ENCODE measurements at regions of chr2 and their contacts with region 1.

Region 1: DNA sequence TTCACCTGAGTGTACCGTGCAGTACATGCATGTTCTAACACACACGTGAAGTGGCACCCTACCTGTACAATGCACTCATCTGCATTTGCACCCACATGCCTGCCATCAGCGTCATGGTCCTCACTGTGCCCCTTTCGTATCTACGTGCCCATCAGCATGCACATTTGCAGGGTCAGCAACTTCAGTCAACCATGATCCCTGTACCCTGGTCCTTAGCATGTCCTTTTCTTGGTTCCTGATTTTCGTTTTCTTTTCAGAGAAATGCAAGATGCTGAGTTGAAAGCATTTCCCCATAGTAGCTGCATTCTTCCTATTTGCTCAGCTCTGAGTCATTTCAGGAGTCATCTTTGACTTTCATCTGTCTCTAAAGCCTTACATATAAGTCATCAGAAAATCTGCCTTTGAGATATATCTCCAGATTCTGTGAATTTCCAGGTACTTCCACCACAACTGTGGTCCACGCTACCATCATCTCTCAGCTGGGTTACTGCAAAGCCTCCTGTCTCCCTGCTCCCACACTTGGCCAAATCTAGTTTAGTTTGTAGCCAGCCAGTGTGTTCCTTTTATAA is 14.7 kb upstream of the PUM2 start:
- DNase-seq: peak; percentile 81
- ATAC-seq: peak; percentile 80
- H3K4me3 Mint-ChIP-seq: no peak overlapping the region
- H3K27ac Mint-ChIP-seq: peak overlapping the region; percentile 57
- H3K4me1 Mint-ChIP-seq: peaks cover 17% of the 10 kb centered on the region
- H3K27me3 Mint-ChIP-seq: peaks cover 14% of the 10 kb centered on the region
- CTCF ChIP-seq: no peak

Region 2: DNA sequence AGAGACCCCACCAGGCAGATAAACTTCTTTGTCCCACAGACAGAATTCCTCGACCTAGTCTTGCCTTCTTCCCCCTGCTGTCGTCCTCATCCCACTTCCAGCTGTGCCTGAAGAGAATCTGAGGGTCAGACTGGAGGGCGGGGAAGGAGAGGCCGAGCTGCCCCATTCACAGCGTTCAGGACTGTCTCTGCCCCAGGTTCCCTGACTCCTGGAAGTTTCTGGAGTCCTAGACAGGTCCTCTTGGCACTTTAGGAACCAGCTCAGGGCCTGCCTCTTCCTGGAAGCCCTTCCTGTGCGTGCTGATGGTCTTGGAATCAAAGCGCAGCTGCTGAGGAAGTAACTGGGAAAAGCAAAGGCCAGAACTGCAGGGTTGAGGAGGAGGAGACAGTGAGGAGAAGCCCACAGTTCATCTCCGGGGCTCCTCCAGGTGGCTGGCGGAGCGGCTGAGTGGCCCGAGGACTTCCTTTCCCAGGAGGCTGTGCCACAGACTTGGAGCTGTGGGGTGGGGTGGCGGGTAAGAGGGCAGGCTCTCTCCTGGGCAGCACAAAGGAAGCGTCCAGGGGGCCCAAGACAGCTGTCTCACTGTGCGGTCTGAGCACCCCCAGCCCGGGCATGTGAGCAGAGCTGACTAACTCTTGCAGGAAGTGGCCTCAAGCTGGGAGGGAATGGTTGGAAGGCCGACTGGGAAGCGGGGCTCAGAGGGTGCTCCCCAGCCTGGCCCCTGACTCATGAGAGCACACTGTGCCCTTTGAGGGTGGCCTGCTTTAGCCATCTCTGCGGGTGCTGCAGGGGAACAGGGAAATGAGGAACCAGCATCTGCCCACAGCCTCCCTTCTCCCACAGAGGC is 179.9 kb before region 1 on chr2:
- CTCF ChIA-PET with region 1: no interaction called
- POLR2A ChIA-PET with region 1: no interaction called
- intact Hi-C with region 1: no loop called
- DNase-seq: no peak
- ATAC-seq: no peak
- H3K4me3 Mint-ChIP-seq: no peak overlapping the region
- H3K27ac Mint-ChIP-seq: no peak overlapping the region
- H3K4me1 Mint-ChIP-seq: no peaks in the 10 kb centered on the region
- H3K27me3 Mint-ChIP-seq: peaks cover 1% of the 10 kb centered on the region
- CTCF ChIP-seq: no peak

Region 3: DNA sequence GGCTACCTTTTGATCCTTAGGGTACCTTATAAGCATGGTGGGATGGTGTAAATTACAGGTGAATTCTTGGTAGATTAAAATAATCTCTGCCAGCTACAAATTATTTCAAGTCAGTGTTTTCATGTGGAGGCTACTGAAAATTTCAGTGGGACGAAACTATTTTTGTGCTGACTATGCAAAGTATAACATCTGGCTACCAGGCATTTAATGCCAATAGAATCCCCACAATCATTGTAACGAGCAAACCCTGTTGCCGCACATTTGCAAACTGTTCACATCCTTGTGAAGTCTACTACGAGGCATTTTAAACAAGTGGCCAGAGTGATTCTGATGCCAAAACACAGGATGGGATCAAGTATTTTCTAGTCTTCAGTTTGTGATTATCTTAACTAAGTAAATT is 92.3 kb before region 1 on chr2:
- CTCF ChIA-PET with region 1: no interaction called
- POLR2A ChIA-PET with region 1: no interaction called
- intact Hi-C with region 1: no loop called
- DNase-seq: no peak
- ATAC-seq: no peak
- H3K4me3 Mint-ChIP-seq: no peak overlapping the region
- H3K27ac Mint-ChIP-seq: peak overlapping the region; percentile 1
- H3K4me1 Mint-ChIP-seq: peaks cover 14% of the 10 kb centered on the region
- H3K27me3 Mint-ChIP-seq: no peaks in the 10 kb centered on the region
- CTCF ChIP-seq: no peak

Region 4: GRCh38 chr2:20350753-20351554 is 14.4 kb before region 1 on chr2 and contains the start of gene PUM2:
- CTCF ChIA-PET with region 1: interaction called, 6 read pairs
- POLR2A ChIA-PET with region 1: interaction called, 37 read pairs
- intact Hi-C with region 1: no loop called
- DNase-seq: peak; percentile 93
- ATAC-seq: peak; percentile 85
- H3K4me3 Mint-ChIP-seq: no peak within 1 kb of the TSS
- H3K27ac Mint-ChIP-seq: peak within 1 kb of the TSS; percentile 92
- H3K4me1 Mint-ChIP-seq: peaks cover 26% of the 10 kb centered on the region
- H3K27me3 Mint-ChIP-seq: no peaks in the 10 kb centered on the region
- CTCF ChIP-seq: no peak
- total RNA-seq, gene PUM2: 104 TPM

Region 5: DNA sequence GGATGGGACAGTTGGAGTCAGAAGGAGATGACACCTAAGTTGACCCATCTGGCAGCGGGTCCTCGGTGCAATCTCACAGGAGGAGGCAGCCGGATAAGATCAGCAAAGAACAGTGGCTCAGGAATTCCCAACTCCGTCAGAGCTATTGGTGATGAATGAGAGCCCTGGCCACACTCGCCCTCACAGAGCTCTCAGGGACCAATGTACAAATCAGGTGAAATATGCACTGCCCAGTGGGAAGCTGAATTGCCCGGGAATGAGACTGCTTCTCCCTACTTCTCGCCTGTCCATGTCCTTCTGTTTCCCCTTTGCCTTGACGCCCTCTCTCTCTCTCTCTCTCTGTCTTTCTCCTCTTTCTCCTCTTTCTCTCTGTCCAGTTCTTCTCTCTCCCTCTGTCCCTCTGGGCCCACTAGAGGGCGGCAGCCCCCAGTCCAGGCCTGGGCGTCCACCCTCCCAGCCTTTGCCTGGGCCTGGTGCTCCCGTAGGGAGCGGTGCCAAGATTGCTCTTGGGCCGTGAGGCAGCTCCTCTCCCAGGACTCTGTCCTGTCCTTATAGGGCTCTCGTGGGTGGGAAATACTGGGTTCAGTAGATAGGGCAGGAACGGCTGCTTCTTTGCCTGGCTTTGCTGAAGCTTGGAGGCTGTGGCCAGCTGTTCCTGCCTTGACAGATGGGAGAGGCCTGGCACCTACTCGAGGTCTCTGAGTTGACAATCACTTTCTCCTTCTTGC is 13.6 kb after region 1 on chr2:
- CTCF ChIA-PET with region 1: interaction called, 11 read pairs
- POLR2A ChIA-PET with region 1: interaction called, 3 read pairs
- intact Hi-C with region 1: no loop called
- DNase-seq: no peak
- ATAC-seq: no peak
- H3K4me3 Mint-ChIP-seq: no peak overlapping the region
- H3K27ac Mint-ChIP-seq: no peak overlapping the region
- H3K4me1 Mint-ChIP-seq: no peaks in the 10 kb centered on the region
- H3K27me3 Mint-ChIP-seq: peaks cover 4% of the 10 kb centered on the region
- CTCF ChIP-seq: peak; percentile 22